K562 (cell line): ENCODE measurements at regions of chr2 and their contacts with region 1.

Region 1: GRCh38 chr2:73233154-73233931 is at the start of gene PRADC1:
- DNase-seq: peak; percentile 97 to 99 (median 98)
- ATAC-seq: peak; percentile 94
- H3K4me3 ChIP-seq: peak within 1 kb of the TSS; percentile 95
- H3K27ac ChIP-seq: peak within 1 kb of the TSS; percentile 87
- H3K4me1 ChIP-seq: peaks cover 16 to 19% of the 10 kb centered on the region in 2 experiments; a peak in 3 of 5 replicates
- H3K27me3 ChIP-seq: no peaks in the 10 kb centered on the region
- CTCF ChIP-seq: no peak
- EP300 ChIP-seq: no peak
- POLR2A ChIP-seq: peak; percentile 67; the same call in 1 of the 2 replicates
- RAD21 ChIP-seq: no peak
- polyA plus RNA-seq, gene PRADC1: 7.3 to 10.7 TPM

Region 2: GRCh38 chr2:73020657-73021370 is 212.5 kb before region 1 on chr2:
- CTCF ChIA-PET with region 1: no interaction called
- POLR2A ChIA-PET with region 1: no interaction called
- in situ Hi-C with region 1: no loop called
- intact Hi-C with region 1: no loop called
- DNase-seq: no peak
- ATAC-seq: no peak
- H3K4me3 ChIP-seq: no peak overlapping the region
- H3K27ac ChIP-seq: no peak overlapping the region
- H3K4me1 ChIP-seq: no peaks in the 10 kb centered on the region
- H3K27me3 ChIP-seq: no peaks in the 10 kb centered on the region
- CTCF ChIP-seq: no peak
- EP300 ChIP-seq: no peak
- POLR2A ChIP-seq: no peak
- RAD21 ChIP-seq: no peak

Region 3: GRCh38 chr2:73212448-73213176 is 20.7 kb before region 1 on chr2:
- CTCF ChIA-PET with region 1: no interaction called
- POLR2A ChIA-PET with region 1: interaction called, 25 read pairs
- in situ Hi-C with region 1: no loop called
- intact Hi-C with region 1: loop called (anchors 1 kb)
- DNase-seq: peak; percentile 76 to 84 (median 80)
- ATAC-seq: peak; percentile 84
- H3K4me3 ChIP-seq: no peak overlapping the region
- H3K27ac ChIP-seq: no peak overlapping the region
- H3K4me1 ChIP-seq: peaks cover 15 to 23% of the 10 kb centered on the region in 2 experiments; a peak in 4 of 5 replicates
- H3K27me3 ChIP-seq: no peaks in the 10 kb centered on the region
- CTCF ChIP-seq: peak; percentile 86 to 96 (median 87)
- EP300 ChIP-seq: no peak
- POLR2A ChIP-seq: no peak
- RAD21 ChIP-seq: peak; percentile 59 to 70

Region 4: DNA sequence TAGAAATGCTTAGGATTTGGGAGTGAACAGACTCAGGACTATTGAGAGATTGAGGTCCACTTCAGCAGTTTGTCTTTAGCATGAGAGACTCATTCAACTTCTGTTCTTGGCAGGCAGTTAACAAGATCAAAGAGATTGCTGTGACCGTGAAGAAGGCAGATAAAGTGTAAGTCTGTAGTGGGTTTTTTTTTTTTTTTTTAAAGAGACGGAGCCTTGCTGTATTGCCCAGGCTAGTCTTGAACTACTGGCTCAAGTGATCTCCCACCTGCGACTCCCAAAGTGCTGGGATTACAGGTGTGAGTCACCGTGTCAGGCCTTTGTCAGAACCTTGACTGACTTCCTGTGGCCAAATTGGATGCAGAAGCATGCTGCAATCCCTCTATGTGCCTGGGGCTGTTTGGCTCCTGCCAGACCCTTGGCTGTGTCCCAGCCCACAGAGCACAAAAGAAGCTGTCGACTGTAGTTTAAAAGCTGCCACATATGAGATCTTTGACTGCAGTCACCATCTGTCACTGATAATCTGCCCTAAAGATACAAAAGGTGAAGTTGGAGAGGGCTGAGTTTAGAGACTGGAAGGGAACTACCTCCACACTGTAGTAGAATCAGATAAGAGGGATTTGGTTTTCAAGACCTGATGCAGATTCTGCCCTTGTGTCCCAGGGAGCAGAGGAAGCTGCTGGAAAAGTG is 10.7 kb after region 1 on chr2:
- CTCF ChIA-PET with region 1: no interaction called
- POLR2A ChIA-PET with region 1: interaction called, 24 read pairs
- in situ Hi-C with region 1: no loop called
- intact Hi-C with region 1: no loop called
- DNase-seq: peak in 1 of 4 experiments; percentile 20
- ATAC-seq: peak; percentile 40
- H3K4me3 ChIP-seq: no peak overlapping the region
- H3K27ac ChIP-seq: peak overlapping the region; percentile 26; the same call in 1 of the 3 replicates
- H3K4me1 ChIP-seq: peaks cover 0 to 10% of the 10 kb centered on the region in 2 experiments; a peak in 3 of 5 replicates
- H3K27me3 ChIP-seq: no peaks in the 10 kb centered on the region
- CTCF ChIP-seq: no peak
- EP300 ChIP-seq: no peak
- POLR2A ChIP-seq: no peak
- RAD21 ChIP-seq: no peak

Region 5: GRCh38 chr2:73642338-73643018 is 409.1 kb after region 1 on chr2 and contains the start of gene NAT8:
- CTCF ChIA-PET with region 1: no interaction called
- POLR2A ChIA-PET with region 1: no interaction called
- in situ Hi-C with region 1: no loop called
- intact Hi-C with region 1: no loop called
- DNase-seq: no peak
- ATAC-seq: no peak
- H3K4me3 ChIP-seq: no peak within 1 kb of the TSS
- H3K27ac ChIP-seq: no peak within 1 kb of the TSS
- H3K4me1 ChIP-seq: no peaks in the 10 kb centered on the region
- H3K27me3 ChIP-seq: peaks cover 12 to 41% of the 10 kb centered on the region in 2 experiments; a peak in 4 of 5 replicates
- CTCF ChIP-seq: no peak
- EP300 ChIP-seq: no peak
- POLR2A ChIP-seq: no peak
- RAD21 ChIP-seq: no peak
- polyA plus RNA-seq, gene NAT8: not detected